Left ventricle myocardium superior (tissue), 1 donor: ENCODE measurements at regions of chr21 and their contacts with region 1.

Region 1: GRCh38 chr21:26719750-26720149 is 125.5 kb downstream of the ADAMTS1 start:
- DNase-seq: peak; percentile 42
- ATAC-seq: peak; percentile 56

Region 2: DNA sequence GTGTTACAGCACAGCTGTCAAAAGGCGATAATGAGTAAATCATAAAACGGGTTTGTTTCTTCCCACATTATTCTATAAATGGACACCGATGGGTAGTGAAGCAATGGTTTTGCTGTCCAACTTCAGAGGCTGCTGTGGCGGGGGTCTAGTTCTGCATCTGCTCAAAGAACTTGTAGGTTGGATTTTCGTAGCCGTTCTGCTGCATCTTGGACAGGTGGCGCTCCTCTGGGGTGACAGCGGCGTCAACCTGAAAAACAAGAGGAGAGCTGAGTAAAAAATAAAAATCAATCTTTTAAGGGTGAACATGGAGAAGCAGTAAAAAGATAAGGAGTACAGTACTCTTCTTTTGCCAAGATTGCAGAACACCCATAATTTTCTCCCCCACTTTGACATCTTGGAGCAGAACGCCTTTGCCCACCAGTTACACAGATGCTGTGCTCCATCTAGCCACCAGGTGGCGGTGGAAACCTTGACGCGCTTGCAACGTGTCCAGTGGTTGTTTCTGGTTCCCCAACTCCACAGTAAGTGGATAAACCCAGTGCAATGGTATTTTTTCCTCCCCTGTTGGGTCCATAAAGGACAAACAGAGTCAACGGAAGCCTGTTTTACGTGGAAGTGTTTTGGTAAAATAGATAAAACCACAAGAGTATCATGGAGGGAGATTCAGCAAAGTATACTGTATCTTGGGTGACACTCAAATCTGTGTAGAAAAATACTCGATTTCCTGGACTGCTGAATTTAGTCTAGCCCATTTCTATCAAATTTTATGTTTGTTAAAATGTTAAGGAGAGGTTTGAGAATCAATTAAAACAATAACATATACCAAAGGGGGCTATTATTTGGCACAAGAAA is 838.0 kb before region 1 on chr21:
- intact Hi-C with region 1: loop called (anchors 5 kb)
- DNase-seq: peak; percentile 77
- ATAC-seq: peak; percentile 81

Region 3: GRCh38 chr21:26224351-26224750 is 495.4 kb before region 1 on chr21:
- intact Hi-C with region 1: no loop called
- DNase-seq: no peak
- ATAC-seq: no peak